Activated CD8-positive, alpha-beta memory T cell treated with anti-CD3 and anti-CD28 coated beads, Interleukin-2, amount 10 ng/mL, durations not matched to agents 7 days and 5 days (primary cell): ENCODE measurements at regions of chr11 and their contacts with region 1.

Region 1: GRCh38 chr11:110199184-110199941 is 97.1 kb downstream of the RDX start:
- DNase-seq: no peak
- ATAC-seq: no peak
- H3K4me3 Mint-ChIP-seq: no peak overlapping the region
- H3K27ac Mint-ChIP-seq: no peak overlapping the region
- H3K4me1 Mint-ChIP-seq: peaks cover 2% of the 10 kb centered on the region
- H3K27me3 Mint-ChIP-seq: peaks cover 4% of the 10 kb centered on the region

Region 2: DNA sequence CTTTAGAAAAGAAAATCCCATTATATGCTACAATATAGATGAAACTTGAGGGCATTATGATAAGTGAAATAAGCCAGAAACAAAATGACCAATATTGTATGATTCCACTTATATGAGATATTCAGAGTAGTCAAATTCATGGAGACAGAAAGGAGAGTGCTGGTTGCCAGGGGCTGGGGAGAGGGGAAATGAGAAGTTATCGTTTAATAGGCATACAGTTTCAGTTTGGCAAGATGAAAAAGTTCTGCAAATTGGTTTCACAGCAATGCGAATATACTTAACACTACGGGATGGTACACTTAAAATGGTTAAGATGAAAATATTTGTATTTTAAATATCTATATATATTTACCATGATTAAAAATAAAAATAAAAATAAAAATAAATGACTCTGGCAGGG is 128.1 kb after region 1 on chr11:
- CTCF ChIA-PET with region 1: interaction called, 12 read pairs
- DNase-seq: no peak
- ATAC-seq: no peak
- H3K4me3 Mint-ChIP-seq: peak overlapping the region; percentile 88
- H3K27ac Mint-ChIP-seq: peak overlapping the region; percentile 96
- H3K4me1 Mint-ChIP-seq: peaks cover 45% of the 10 kb centered on the region
- H3K27me3 Mint-ChIP-seq: no peaks in the 10 kb centered on the region

Region 3: GRCh38 chr11:110362971-110363509 is 163.7 kb after region 1 on chr11:
- CTCF ChIA-PET with region 1: interaction called, 20 read pairs
- DNase-seq: no peak
- ATAC-seq: no peak
- H3K4me3 Mint-ChIP-seq: peak overlapping the region; percentile 7
- H3K27ac Mint-ChIP-seq: peak overlapping the region; percentile 21
- H3K4me1 Mint-ChIP-seq: peaks cover 15% of the 10 kb centered on the region
- H3K27me3 Mint-ChIP-seq: no peaks in the 10 kb centered on the region

Region 4: DNA sequence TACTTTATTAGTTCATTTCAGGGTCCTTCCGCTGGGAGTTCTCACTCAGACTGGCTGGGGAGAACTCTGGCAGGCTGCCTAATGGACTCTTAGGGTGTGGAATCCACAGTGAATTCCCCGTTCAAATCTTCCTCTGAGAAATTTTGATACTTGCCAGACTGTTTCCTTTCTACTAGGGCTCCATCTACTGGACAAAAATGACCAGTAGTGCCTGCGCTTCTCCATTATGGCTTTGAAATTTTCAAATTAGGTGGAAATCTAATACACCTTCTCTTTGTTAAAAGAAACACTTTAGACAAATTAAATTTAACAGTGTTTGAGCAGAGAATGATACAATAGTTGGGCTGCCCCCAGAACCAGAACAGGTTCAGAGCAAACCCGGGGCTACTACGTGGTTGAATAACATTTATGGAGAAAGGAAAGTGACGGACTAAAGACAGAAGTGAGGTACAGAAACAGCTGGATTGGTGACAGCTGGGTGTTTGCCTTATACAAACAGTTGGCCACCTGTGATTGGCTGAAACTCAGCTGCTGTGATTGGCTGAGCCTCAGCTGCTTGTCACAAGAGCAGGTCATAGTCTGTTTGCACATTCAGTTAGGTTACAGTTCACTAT is 177.5 kb after region 1 on chr11:
- CTCF ChIA-PET with region 1: interaction called, 51 read pairs
- DNase-seq: no peak
- ATAC-seq: peak; percentile 44
- H3K4me3 Mint-ChIP-seq: no peak overlapping the region
- H3K27ac Mint-ChIP-seq: no peak overlapping the region
- H3K4me1 Mint-ChIP-seq: peaks cover 18% of the 10 kb centered on the region
- H3K27me3 Mint-ChIP-seq: no peaks in the 10 kb centered on the region